ENCODE measurements at regions of chr5 and their contacts with region 1.

Region 1: GRCh38 chr5:142507531-142508372 is 178.1 kb downstream of the FGF1 start:
- DNase-seq: peak; percentile 71
- H3K4me3 Mint-ChIP-seq: peak overlapping the region; percentile 66
- H3K27ac Mint-ChIP-seq: peak overlapping the region; percentile 83
- H3K4me1 Mint-ChIP-seq: peaks cover 66% of the 10 kb centered on the region
- H3K27me3 Mint-ChIP-seq: no peaks in the 10 kb centered on the region
- CTCF ChIP-seq: no peak

Region 2: GRCh38 chr5:142353071-142353472 is 154.7 kb before region 1 on chr5:
- CTCF ChIA-PET with region 1: no interaction called
- intact Hi-C with region 1: no loop called
- DNase-seq: no peak
- H3K4me3 Mint-ChIP-seq: no peak overlapping the region
- H3K27ac Mint-ChIP-seq: no peak overlapping the region
- H3K4me1 Mint-ChIP-seq: peaks cover 21% of the 10 kb centered on the region
- H3K27me3 Mint-ChIP-seq: no peaks in the 10 kb centered on the region
- CTCF ChIP-seq: no peak

Region 3: DNA sequence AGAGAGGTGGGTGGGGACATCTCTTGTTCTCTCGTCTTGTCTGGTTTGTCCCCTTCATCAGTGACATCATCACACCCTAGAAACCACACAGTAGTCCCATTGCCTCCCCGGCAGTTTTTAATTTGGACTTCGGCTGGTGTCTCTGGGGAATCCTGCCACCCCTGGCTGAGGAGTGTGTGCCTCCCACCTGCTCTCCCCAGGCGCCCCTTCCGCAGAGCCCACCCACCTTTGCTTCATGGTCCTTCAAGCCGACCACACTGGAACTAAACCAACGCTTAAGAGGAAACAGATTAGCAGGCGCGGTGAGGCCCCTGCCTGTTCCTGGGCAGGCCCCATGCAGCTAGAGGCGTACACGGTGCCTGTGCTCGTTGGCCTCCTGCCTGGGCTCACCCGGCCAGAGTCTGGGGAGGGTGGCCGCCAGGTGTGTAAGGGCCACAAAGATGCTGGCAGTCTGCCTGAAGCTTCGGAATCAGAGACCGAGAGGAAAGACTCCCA is 75.3 kb before region 1 on chr5:
- CTCF ChIA-PET with region 1: no interaction called
- intact Hi-C with region 1: loop called (anchors 5 kb)
- DNase-seq: peak; percentile 28
- H3K4me3 Mint-ChIP-seq: no peak overlapping the region
- H3K27ac Mint-ChIP-seq: no peak overlapping the region
- H3K4me1 Mint-ChIP-seq: peaks cover 34% of the 10 kb centered on the region
- H3K27me3 Mint-ChIP-seq: no peaks in the 10 kb centered on the region
- CTCF ChIP-seq: no peak